ENCODE measurements at regions of chr21 and their contacts with region 1.

Region 1: GRCh38 chr21:31866077-31866511 is 6.7 kb upstream of the HUNK start:
- DNase-seq: peak; percentile 92 to 93 (median 92)
- ATAC-seq: peak; percentile 96 to 99 (median 98)
- H3K4me3 ChIP-seq: no peak overlapping the region
- H3K27ac ChIP-seq: no peak overlapping the region
- H3K4me1 ChIP-seq: peaks cover 0 to 3% (median 0%) of the 10 kb centered on the region in 4 donors
- H3K27me3 ChIP-seq: no peaks in the 10 kb centered on the region
- CTCF ChIP-seq: peak; percentile 79 to 97 (median 96)
- POLR2A ChIP-seq: no peak

Region 2: GRCh38 chr21:32248571-32249530 is 382.8 kb after region 1 on chr21:
- intact Hi-C with region 1: loop called (anchors 5 to 10 kb)
- DNase-seq: no peak
- ATAC-seq: no peak
- H3K4me3 ChIP-seq: no peak overlapping the region
- H3K27ac ChIP-seq: no peak overlapping the region
- H3K4me1 ChIP-seq: no peaks in the 10 kb centered on the region
- H3K27me3 ChIP-seq: no peaks in the 10 kb centered on the region
- CTCF ChIP-seq: no peak
- POLR2A ChIP-seq: no peak

Region 3: GRCh38 chr21:32257962-32258785 is 392.1 kb after region 1 on chr21:
- intact Hi-C with region 1: loop called in 1 of 2 experiments (anchors 10 kb)
- DNase-seq: peak; percentile 53 to 69 (median 61)
- ATAC-seq: peak; percentile 95 to 99 (median 96)
- H3K4me3 ChIP-seq: no peak overlapping the region
- H3K27ac ChIP-seq: no peak overlapping the region
- H3K4me1 ChIP-seq: no peaks in the 10 kb centered on the region
- H3K27me3 ChIP-seq: no peaks in the 10 kb centered on the region
- CTCF ChIP-seq: peak; percentile 68 to 85 (median 74)
- POLR2A ChIP-seq: no peak

Measured in right lobe of liver (tissue), 6 donors.